Calu3 (cell line): ENCODE measurements at regions of chr2 and their contacts with region 1.

Region 1: GRCh38 chr2:173571021-173571882 is 216.6 kb downstream of the CDCA7 start:
- DNase-seq: peak; percentile 34
- H3K4me3 Mint-ChIP-seq: peak overlapping the region; percentile 59
- H3K27ac Mint-ChIP-seq: peak overlapping the region; percentile 78
- H3K4me1 Mint-ChIP-seq: peaks cover 54% of the 10 kb centered on the region
- H3K27me3 Mint-ChIP-seq: no peaks in the 10 kb centered on the region
- CTCF ChIP-seq: peak; percentile 75

Region 2: GRCh38 chr2:173472112-173472511 is 99.1 kb before region 1 on chr2:
- CTCF ChIA-PET with region 1: interaction called, 14 read pairs
- intact Hi-C with region 1: loop called (anchors 5 kb)
- DNase-seq: no peak
- H3K4me3 Mint-ChIP-seq: no peak overlapping the region
- H3K27ac Mint-ChIP-seq: no peak overlapping the region
- H3K4me1 Mint-ChIP-seq: no peaks in the 10 kb centered on the region
- H3K27me3 Mint-ChIP-seq: no peaks in the 10 kb centered on the region
- CTCF ChIP-seq: no peak

Region 3: DNA sequence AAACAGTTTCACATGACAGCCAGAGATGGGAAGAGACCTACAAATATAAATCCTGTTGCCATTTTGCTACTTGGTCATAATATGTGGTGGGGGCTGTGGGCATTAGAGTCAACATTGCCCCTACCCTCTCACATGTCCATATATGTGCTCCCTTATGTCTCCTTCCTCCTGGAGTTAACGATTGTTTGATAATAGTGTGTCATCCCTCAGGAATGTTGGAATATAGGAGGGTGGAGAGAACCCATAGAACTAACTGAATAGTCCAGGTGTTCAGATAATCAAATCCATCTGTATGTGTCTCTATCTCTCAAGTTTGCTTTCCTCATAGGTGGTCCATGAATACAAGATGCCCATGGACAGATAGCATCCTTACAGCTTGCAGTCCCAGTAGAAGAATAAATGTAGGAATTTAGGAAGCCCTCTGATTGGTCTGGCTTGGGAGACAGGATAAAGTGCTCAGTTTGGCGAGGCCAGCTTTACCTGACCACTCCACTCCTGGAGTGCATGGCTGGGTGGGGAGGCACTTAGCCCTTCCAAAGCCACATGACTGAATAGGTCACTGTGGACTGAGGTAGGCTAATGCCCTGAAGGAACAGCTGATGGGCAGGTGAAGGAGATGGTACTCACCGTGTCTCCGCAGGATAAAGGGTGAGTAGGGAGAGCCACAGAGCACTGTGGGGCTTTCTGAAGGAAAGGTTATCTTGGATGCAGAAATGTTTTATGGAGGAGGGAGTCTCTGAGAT is 49.6 kb before region 1 on chr2:
- CTCF ChIA-PET with region 1: no interaction called
- intact Hi-C with region 1: no loop called
- DNase-seq: no peak
- H3K4me3 Mint-ChIP-seq: no peak overlapping the region
- H3K27ac Mint-ChIP-seq: no peak overlapping the region
- H3K4me1 Mint-ChIP-seq: peaks cover 13% of the 10 kb centered on the region
- H3K27me3 Mint-ChIP-seq: no peaks in the 10 kb centered on the region
- CTCF ChIP-seq: no peak

Region 4: DNA sequence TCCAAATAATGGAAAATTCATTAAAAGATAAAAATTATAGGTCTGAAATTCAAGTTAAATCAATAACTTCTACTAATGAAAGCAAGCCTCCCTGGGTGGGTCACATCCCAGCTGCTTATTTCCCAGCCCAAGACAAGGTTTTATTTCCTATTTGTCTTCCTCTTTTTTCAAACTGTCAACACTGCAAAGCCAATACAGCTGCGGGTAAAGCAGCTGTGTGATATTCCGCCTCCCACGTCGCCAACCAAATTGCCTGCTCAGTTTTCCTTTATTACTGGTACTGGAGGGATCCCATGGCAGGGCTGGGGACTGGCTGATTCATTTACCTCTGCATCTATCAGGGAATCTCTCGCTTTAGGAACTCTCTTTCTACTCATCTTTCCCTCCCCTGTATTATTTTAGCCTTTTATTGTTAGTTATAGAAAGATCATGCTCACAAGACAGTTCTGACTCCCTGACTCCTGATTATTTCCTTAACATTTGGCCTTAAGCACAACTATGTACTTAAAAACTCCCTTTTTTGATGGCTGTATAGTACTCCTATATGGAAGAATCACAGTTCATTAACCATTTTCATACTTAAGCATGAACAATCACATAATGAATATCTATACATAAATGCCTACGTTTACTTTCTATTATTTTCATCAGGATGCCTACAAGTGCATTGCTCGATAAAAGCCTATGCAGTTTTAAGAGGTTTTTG is 36.5 kb after region 1 on chr2:
- CTCF ChIA-PET with region 1: no interaction called
- intact Hi-C with region 1: no loop called
- DNase-seq: no peak
- H3K4me3 Mint-ChIP-seq: no peak overlapping the region
- H3K27ac Mint-ChIP-seq: no peak overlapping the region
- H3K4me1 Mint-ChIP-seq: no peaks in the 10 kb centered on the region
- H3K27me3 Mint-ChIP-seq: no peaks in the 10 kb centered on the region
- CTCF ChIP-seq: no peak

Region 5: GRCh38 chr2:173623438-173624319 is 52.4 kb after region 1 on chr2:
- CTCF ChIA-PET with region 1: no interaction called
- intact Hi-C with region 1: loop called (anchors 5 kb)
- DNase-seq: no peak
- H3K4me3 Mint-ChIP-seq: no peak overlapping the region
- H3K27ac Mint-ChIP-seq: no peak overlapping the region
- H3K4me1 Mint-ChIP-seq: no peaks in the 10 kb centered on the region
- H3K27me3 Mint-ChIP-seq: no peaks in the 10 kb centered on the region
- CTCF ChIP-seq: no peak

Region 6: DNA sequence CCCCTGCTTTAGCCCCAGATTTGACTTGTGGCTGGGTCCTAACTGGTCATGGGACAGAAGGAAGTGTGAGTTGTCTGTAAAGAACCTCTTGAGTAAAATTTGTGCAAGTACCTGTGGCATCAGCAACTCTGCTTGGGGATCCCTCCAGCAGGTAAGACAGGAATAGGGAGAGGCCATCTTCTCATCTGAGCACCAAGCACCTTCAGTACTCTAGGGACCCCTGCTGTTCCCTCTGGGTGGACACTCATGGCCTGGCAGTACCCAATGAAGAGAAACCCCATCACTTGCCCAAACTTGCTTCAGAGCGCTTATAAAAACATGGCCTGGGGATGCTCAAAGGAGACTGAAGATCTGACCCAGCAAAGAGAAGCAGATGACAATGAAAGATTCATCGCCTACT is 96.2 kb after region 1 on chr2:
- CTCF ChIA-PET with region 1: no interaction called
- intact Hi-C with region 1: loop called (anchors 5 kb)
- DNase-seq: peak; percentile 38
- H3K4me3 Mint-ChIP-seq: no peak overlapping the region
- H3K27ac Mint-ChIP-seq: no peak overlapping the region
- H3K4me1 Mint-ChIP-seq: peaks cover 10% of the 10 kb centered on the region
- H3K27me3 Mint-ChIP-seq: no peaks in the 10 kb centered on the region
- CTCF ChIP-seq: peak; percentile 39

Region 7: GRCh38 chr2:173749315-173749714 is 178.1 kb after region 1 on chr2:
- CTCF ChIA-PET with region 1: no interaction called
- intact Hi-C with region 1: loop called (anchors 1 kb)
- DNase-seq: no peak
- H3K4me3 Mint-ChIP-seq: no peak overlapping the region
- H3K27ac Mint-ChIP-seq: no peak overlapping the region
- H3K4me1 Mint-ChIP-seq: no peaks in the 10 kb centered on the region
- H3K27me3 Mint-ChIP-seq: no peaks in the 10 kb centered on the region
- CTCF ChIP-seq: no peak

Region 8: DNA sequence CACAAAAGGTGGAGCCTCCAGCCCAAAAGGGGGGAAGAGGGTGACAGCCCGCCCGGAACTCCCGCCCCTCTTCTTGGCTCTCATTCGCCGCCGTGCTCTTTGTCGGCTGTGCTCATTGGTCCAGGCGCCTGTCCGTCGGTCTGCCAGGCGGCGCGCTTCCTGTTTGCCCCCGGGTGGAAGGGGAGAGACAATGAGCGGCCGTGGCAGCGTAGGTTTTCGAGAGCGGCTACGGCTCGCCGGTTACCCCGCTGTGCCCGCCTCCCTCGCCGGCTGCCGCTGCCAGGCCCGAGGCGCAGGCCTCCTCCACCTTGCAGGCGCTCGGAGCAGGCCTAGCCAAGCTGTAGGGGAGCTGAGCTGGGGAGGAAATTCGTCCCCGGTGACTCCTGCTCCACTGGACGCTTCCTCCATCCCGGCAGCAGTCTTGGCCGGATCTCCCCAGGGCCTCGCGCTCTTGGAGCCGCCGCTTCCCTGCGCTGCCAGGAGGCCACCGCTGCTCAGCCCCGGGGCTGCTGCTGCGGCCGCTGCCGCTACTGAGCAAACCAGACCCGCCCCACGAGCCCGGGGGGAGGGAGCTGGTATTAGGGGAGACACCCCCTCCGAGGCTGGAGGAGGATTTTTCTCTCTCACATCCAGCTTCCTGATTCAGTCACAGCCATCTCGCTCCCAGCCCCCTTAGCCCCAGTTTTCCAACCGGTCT is 394.2 kb after region 1 on chr2 and contains the start of gene SP3:
- CTCF ChIA-PET with region 1: no interaction called
- intact Hi-C with region 1: loop called (anchors 10 kb)
- DNase-seq: peak; percentile 96
- H3K4me3 Mint-ChIP-seq: peak within 1 kb of the TSS; percentile 96
- H3K27ac Mint-ChIP-seq: peak within 1 kb of the TSS; percentile 82
- H3K4me1 Mint-ChIP-seq: peaks cover 17% of the 10 kb centered on the region
- H3K27me3 Mint-ChIP-seq: no peaks in the 10 kb centered on the region
- CTCF ChIP-seq: no peak
- total RNA-seq, gene SP3: 78.0 and 82.5 TPM in 2 replicates

Region 9: GRCh38 chr2:174341286-174341994 is 770.2 kb after region 1 on chr2:
- CTCF ChIA-PET with region 1: no interaction called
- intact Hi-C with region 1: loop called (anchors 5 kb)
- DNase-seq: peak; percentile 89
- H3K4me3 Mint-ChIP-seq: peak overlapping the region; percentile 62
- H3K27ac Mint-ChIP-seq: no peak overlapping the region
- H3K4me1 Mint-ChIP-seq: peaks cover 14% of the 10 kb centered on the region
- H3K27me3 Mint-ChIP-seq: peaks cover 73% of the 10 kb centered on the region
- CTCF ChIP-seq: peak; percentile 94